ENCODE measurements at regions of chr20 and their contacts with region 1.

Region 1: DNA sequence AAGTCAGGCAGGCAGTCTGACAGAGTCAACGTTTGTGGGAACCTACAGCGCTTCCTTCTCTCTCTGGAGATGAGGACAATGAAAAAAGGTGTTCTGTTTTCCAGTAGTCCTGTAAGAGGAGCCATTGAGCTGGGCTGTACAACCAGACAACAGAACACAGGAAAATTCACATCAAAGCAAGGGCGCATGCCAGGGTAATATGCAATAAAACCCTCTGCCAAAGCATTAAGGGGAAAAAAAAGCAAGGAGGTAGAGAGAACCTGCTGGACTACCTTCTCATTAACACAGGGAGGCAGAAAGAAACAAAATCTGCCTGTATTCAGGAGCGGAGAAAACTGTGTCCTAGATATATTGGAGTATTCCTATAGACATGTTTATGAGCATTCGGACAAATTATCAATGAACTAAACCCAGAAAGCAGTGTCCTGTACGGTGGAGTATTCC is 1.3 kb downstream of the RNF24 start:
- DNase-seq: no peak
- H3K4me3 ChIP-seq: peak overlapping the region in 7 of 8 donors; percentile 36 to 98 (median 88)
- H3K27ac ChIP-seq: peak overlapping the region in 7 of 8 donors; percentile 59 to 97 (median 90)
- H3K4me1 ChIP-seq: peaks cover 0 to 91% (median 58%) of the 10 kb centered on the region in 6 donors
- H3K27me3 ChIP-seq: no peaks in the 10 kb centered on the region
- CTCF ChIP-seq: peak in 6 of 11 experiments; percentile 12 to 50 (median 42)
- POLR2A ChIP-seq: no peak

Region 2: DNA sequence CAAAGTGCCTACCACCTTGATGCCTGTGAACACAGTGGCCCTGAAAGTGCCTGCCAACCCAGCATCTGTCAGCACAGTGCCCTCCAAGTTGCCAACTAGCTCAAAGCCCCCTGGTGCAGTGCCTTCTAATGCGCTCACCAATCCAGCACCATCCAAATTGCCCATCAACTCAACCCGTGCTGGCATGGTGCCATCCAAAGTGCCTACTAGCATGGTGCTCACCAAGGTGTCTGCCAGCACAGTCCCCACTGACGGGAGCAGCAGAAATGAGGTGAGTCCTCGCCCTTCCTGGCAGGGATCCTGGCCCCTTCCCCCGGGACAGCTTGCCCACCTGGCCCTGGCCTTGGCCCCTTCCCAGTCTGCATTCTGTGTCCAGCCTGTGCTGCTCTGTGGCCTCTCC is 149.5 kb before region 1 on chr20:
- intact Hi-C with region 1: no loop called
- DNase-seq: no peak
- H3K4me3 ChIP-seq: no peak overlapping the region
- H3K27ac ChIP-seq: peak overlapping the region in 1 of 8 donors; percentile 11
- H3K4me1 ChIP-seq: peaks cover 0 to 7% (median 0%) of the 10 kb centered on the region in 6 donors
- H3K27me3 ChIP-seq: no peaks in the 10 kb centered on the region
- CTCF ChIP-seq: no peak
- POLR2A ChIP-seq: no peak

Region 3: DNA sequence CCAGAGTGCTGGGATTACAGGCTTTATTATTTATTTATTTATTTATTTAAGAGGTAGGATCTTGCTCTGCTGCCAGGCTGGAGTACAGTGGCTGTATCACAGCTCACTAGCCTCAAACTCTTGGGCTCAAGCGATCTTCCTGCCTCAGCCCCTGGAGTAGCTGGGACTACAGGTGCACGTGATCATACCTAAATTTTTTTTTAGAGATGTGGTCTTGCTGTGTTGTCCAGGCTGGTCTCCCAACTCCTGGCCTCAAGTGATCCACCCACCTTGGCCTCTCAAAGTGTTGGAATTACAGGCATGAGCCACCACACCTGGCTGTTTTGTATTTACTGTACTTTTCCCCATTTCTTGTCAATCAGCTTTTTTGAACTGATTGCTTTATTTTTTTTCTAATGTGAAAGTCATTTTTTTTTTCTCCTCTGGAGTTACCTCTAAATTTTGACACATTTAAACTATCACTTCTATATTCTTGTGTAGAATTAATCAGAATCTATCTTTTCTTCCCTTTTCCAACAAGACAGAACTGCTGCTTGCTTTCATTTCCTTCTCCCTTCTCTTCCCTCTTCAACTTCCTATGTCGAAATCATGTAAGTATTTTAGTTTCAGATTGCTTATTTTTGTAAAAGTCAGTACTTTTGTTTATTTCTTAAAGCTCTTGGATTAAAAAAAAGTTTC is 112.9 kb before region 1 on chr20:
- intact Hi-C with region 1: loop called (anchors 5 kb)
- DNase-seq: no peak
- H3K4me3 ChIP-seq: peak overlapping the region in 3 of 8 donors; percentile 5 to 43 (median 11)
- H3K27ac ChIP-seq: peak overlapping the region in 7 of 8 donors; percentile 54 to 84 (median 71)
- H3K4me1 ChIP-seq: peaks cover 48 to 100% (median 94%) of the 10 kb centered on the region in 6 donors
- H3K27me3 ChIP-seq: no peaks in the 10 kb centered on the region
- CTCF ChIP-seq: no peak
- POLR2A ChIP-seq: no peak

Region 4: DNA sequence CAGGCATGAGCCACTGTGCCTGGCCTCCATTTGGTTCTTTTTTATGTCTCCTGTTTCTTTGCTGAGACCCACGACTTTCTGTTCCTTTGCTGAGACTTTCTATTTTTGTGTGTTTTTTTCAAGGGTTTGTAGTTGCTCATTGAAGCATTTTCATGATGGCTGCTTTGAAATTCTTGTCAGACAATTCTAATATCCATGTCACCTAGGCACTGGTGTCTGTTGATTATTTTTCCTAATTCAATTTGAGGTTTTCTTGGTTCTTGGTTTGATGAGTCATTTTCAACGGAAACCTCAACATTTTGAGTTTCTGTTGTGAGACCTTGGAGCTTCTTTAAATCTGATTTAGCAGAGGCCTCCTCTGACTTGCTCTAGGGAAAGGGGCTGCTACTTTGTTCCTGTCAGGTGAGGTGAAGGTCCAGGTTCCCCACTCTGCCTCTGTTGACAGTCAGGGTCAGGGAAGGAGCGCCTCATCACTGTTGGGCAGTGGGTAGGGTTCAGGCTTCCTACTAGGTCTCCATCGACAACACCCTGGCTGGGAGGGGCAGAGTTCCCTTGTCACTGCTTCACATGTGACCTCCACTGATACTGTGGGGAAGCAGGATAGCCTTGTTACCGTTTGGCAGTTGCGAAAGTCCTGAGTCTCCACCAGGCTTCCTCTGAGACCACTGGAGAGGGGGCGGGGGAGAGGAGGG is 68.5 kb after region 1 on chr20:
- intact Hi-C with region 1: loop called (anchors 10 kb)
- DNase-seq: peak; percentile 85
- H3K4me3 ChIP-seq: peak overlapping the region in 1 of 8 donors; percentile 47
- H3K27ac ChIP-seq: peak overlapping the region in 7 of 8 donors; percentile 63 to 90 (median 76)
- H3K4me1 ChIP-seq: peaks cover 7 to 59% (median 27%) of the 10 kb centered on the region in 6 donors
- H3K27me3 ChIP-seq: no peaks in the 10 kb centered on the region
- CTCF ChIP-seq: no peak
- POLR2A ChIP-seq: no peak

Measured in spleen (tissue), 13 donors.